CD8-positive, alpha-beta T cell (primary cell): ENCODE measurements at regions of chr12 and their contacts with region 1.

Region 1: DNA sequence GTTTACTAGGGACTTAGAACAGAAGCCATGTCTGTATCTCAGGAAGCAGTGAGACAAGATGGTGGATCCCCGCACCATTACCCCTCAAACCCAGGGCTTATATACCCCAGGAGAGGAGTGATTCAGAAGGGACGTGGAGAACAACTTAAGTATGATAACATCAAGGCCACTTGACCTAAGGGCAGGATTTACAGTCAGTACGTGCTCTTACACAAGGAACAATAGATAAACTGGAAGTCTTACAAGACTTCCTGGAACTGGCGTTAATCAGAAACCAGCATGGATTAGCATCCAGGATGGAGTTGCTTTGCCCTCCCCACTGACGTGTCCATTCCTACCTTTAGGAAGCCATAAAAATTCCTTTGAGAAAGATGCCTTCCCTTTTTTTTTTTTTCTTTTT is 8.6 kb upstream of the ETFBKMT start:
- DNase-seq: no peak
- ATAC-seq: no peak
- H3K4me3 ChIP-seq: no peak overlapping the region
- H3K4me3 Mint-ChIP-seq: no peak overlapping the region
- H3K27ac ChIP-seq: no peak overlapping the region
- H3K27ac Mint-ChIP-seq: no peak overlapping the region
- H3K4me1 ChIP-seq: peaks cover 6% of the 10 kb centered on the region
- H3K4me1 Mint-ChIP-seq: peaks cover 12% of the 10 kb centered on the region
- H3K27me3 ChIP-seq: no peaks in the 10 kb centered on the region
- H3K27me3 Mint-ChIP-seq: no peaks in the 10 kb centered on the region
- CTCF ChIP-seq: no peak

Region 2: DNA sequence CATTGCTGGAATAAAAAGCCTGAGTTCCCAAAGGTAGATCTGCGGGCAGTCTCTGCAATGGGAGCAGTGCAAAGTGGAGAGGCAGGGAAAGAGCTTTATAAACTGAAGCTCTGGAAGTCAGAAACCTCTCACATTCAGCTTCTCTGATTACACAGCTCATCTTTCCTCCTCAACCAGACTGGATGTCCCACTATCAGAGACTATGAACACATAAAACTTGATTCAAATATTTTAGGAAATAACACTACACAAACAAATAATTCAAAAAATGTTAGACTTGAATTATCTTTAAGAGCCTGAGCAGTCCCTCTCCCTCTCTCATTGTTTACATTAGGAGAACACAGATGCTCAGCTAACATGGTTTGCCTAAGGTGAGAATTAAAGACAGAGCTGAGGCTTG is 132.9 kb before region 1 on chr12:
- CTCF ChIA-PET with region 1: no interaction called
- POLR2A ChIA-PET with region 1: no interaction called
- intact Hi-C with region 1: no loop called
- DNase-seq: no peak
- ATAC-seq: no peak
- H3K4me3 ChIP-seq: no peak overlapping the region
- H3K4me3 Mint-ChIP-seq: no peak overlapping the region
- H3K27ac ChIP-seq: no peak overlapping the region
- H3K27ac Mint-ChIP-seq: no peak overlapping the region
- H3K4me1 ChIP-seq: no peaks in the 10 kb centered on the region
- H3K4me1 Mint-ChIP-seq: no peaks in the 10 kb centered on the region
- H3K27me3 ChIP-seq: no peaks in the 10 kb centered on the region
- H3K27me3 Mint-ChIP-seq: peaks cover 2% of the 10 kb centered on the region
- CTCF ChIP-seq: no peak

Region 3: GRCh38 chr12:31603546-31604009 is 47.3 kb before region 1 on chr12:
- CTCF ChIA-PET with region 1: no interaction called
- POLR2A ChIA-PET with region 1: no interaction called
- intact Hi-C with region 1: no loop called
- DNase-seq: peak in 1 of 9 experiments; percentile 22
- ATAC-seq: no peak
- H3K4me3 ChIP-seq: no peak overlapping the region
- H3K4me3 Mint-ChIP-seq: no peak overlapping the region
- H3K27ac ChIP-seq: no peak overlapping the region
- H3K27ac Mint-ChIP-seq: no peak overlapping the region
- H3K4me1 ChIP-seq: no peaks in the 10 kb centered on the region
- H3K4me1 Mint-ChIP-seq: no peaks in the 10 kb centered on the region
- H3K27me3 ChIP-seq: peaks cover 0 to 5% of the 10 kb centered on the region in 2 experiments
- H3K27me3 Mint-ChIP-seq: peaks cover 4% of the 10 kb centered on the region
- CTCF ChIP-seq: no peak

Region 4: GRCh38 chr12:32302218-32303173 is 651.6 kb after region 1 on chr12:
- CTCF ChIA-PET with region 1: interaction called, 39 read pairs
- POLR2A ChIA-PET with region 1: no interaction called
- intact Hi-C with region 1: loop called (anchors 1 to 2 kb)
- DNase-seq: peak in 1 of 9 experiments; percentile 35
- ATAC-seq: no peak
- H3K4me3 ChIP-seq: no peak overlapping the region
- H3K4me3 Mint-ChIP-seq: no peak overlapping the region
- H3K27ac ChIP-seq: no peak overlapping the region
- H3K27ac Mint-ChIP-seq: no peak overlapping the region
- H3K4me1 ChIP-seq: no peaks in the 10 kb centered on the region
- H3K4me1 Mint-ChIP-seq: peaks cover 5% of the 10 kb centered on the region
- H3K27me3 ChIP-seq: no peaks in the 10 kb centered on the region
- H3K27me3 Mint-ChIP-seq: no peaks in the 10 kb centered on the region
- CTCF ChIP-seq: peak; percentile 21

Region 5: DNA sequence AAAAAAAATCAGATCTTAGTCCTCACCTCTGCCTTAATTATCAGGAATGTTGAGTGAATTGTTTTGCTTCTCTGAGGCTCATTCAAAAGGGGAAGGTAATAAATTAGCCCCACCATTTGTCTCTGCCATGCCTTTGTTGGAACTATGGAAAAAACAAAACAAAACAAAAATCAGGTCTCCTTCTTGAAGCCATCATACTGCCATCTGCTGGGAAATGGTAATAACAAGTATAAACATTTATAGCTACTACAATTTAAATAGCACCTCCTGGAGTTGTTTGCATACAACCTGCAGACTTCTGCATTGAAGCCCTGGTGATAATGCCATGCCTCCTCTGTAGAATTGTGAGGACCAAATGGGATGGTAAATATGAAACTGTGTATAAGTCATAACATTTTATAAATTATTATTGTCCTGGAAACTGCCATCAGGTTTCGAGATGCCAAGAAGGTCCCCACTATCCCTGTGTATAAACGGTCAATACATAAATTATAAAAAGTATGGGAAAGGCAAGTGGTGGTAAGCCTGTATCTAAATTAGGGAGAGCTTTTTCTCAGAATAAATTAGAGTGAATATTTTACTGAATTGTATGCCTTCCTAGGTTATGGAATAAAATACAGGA is 661.2 kb after region 1 on chr12:
- CTCF ChIA-PET with region 1: interaction called, 63 read pairs
- POLR2A ChIA-PET with region 1: interaction called, 13 read pairs
- intact Hi-C with region 1: loop called in 1 of 2 experiments (anchors 1 kb)
- DNase-seq: peak in 2 of 9 experiments; percentile 58 to 72
- ATAC-seq: peak; percentile 44
- H3K4me3 ChIP-seq: no peak overlapping the region
- H3K4me3 Mint-ChIP-seq: no peak overlapping the region
- H3K27ac ChIP-seq: no peak overlapping the region
- H3K27ac Mint-ChIP-seq: no peak overlapping the region
- H3K4me1 ChIP-seq: no peaks in the 10 kb centered on the region
- H3K4me1 Mint-ChIP-seq: peaks cover 3% of the 10 kb centered on the region
- H3K27me3 ChIP-seq: no peaks in the 10 kb centered on the region
- H3K27me3 Mint-ChIP-seq: no peaks in the 10 kb centered on the region
- CTCF ChIP-seq: peak; percentile 35

Region 6: DNA sequence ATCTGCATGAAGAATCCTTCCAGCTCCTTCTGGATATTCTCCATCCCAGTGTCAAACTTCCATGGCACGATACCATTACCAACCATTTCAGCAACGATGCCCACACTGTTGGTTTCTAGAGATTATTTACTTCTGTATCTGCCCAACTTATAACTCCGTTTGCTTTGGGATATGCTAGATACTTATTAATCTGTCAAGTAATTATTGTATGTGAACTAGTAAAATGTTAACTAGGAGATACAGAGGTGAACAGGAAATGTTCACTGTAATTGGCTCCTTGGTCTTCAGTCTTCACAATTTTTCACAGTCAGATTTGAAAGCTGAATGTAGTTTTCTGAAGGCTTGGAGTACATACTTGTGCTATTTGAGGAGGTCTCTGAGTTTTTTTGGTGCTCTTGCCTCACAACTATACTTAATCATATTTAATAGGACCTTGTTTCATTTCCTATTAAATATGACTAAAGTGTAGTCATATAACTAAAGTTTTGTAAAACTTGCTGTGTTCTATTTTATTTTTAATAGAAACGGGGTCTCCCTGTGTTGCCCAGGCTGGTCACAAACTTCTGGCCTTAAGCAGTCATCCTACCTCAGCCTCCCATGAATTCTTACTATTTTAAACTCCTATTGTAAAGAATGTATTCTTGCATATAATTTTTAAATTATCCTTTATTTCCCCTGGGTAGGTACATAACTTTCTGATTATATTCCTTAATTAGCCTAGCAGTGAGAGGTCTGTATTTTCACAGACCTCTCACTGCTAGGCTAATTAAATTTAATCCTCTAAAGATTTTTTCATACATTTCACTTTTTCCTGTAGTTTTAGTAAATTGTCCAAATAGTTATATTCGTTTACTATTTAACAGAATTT is 828.2 kb after region 1 on chr12:
- CTCF ChIA-PET with region 1: no interaction called
- POLR2A ChIA-PET with region 1: no interaction called
- intact Hi-C with region 1: no loop called
- DNase-seq: no peak
- ATAC-seq: no peak
- H3K4me3 ChIP-seq: no peak overlapping the region
- H3K4me3 Mint-ChIP-seq: no peak overlapping the region
- H3K27ac ChIP-seq: no peak overlapping the region
- H3K27ac Mint-ChIP-seq: no peak overlapping the region
- H3K4me1 ChIP-seq: no peaks in the 10 kb centered on the region
- H3K4me1 Mint-ChIP-seq: no peaks in the 10 kb centered on the region
- H3K27me3 ChIP-seq: no peaks in the 10 kb centered on the region
- H3K27me3 Mint-ChIP-seq: no peaks in the 10 kb centered on the region
- CTCF ChIP-seq: no peak